ENCODE measurements at regions of chr2 and their contacts with region 1.

Region 1: GRCh38 chr2:195622956-195623355 is 34.1 kb upstream of the SLC39A10 start:
- DNase-seq: peak; percentile 93
- H3K4me3 ChIP-seq: peak overlapping the region in 1 of 3 experiments; percentile 16
- H3K27ac ChIP-seq: peak overlapping the region; percentile 94
- H3K4me1 ChIP-seq: peaks cover 22% of the 10 kb centered on the region
- H3K27me3 ChIP-seq: no peaks in the 10 kb centered on the region
- CTCF ChIP-seq: no peak

Region 2: DNA sequence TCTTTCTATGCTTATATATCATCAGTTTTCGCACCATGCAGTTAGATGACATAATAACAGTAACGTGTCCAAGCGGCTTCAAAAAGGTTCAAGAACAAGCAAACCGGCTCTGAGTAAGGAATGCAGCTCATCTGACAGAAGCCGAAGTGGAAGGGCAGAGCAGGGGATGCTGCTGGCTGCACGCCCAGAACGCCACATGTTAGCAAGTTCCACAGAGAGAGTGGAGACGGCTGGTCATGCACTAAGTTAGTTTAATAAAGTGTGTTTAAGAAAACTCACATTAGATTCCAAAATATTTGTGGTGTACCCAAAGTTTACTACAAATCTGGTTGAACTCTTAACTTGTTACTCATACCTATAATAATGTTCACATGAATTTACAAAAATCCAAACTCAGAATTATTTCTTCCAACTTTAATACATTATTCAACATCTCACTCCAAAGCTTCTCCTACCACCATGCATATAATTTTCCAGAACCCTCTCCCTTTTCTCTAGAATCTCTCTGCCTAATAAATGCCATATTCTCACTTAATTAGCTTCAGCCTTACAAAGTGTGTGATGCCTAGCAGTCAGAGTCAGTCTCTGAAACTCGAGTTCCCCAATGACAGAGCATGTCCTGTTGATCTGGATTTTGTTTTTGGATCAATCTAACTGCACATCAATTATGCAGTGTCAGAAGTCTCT is 275.7 kb after region 1 on chr2:
- CTCF ChIA-PET with region 1: interaction called, 23 read pairs
- dilution Hi-C with region 1: no loop called
- in situ Hi-C with region 1: no loop called
- intact Hi-C with region 1: no loop called
- DNase-seq: peak; percentile 81
- H3K4me3 ChIP-seq: no peak overlapping the region
- H3K27ac ChIP-seq: no peak overlapping the region
- H3K4me1 ChIP-seq: peaks cover 11% of the 10 kb centered on the region
- H3K27me3 ChIP-seq: no peaks in the 10 kb centered on the region
- CTCF ChIP-seq: no peak